ENCODE measurements at regions of chr4 and their contacts with region 1.

Region 1: GRCh38 chr4:56410235-56411062 is 23.2 kb upstream of the AASDH start:
- DNase-seq: peak; percentile 99
- H3K4me3 ChIP-seq: peak overlapping the region; percentile 20 to 76 (median 26)
- H3K27ac ChIP-seq: peak overlapping the region; percentile 97
- H3K4me1 ChIP-seq: peaks cover 29% of the 10 kb centered on the region
- H3K27me3 ChIP-seq: no peaks in the 10 kb centered on the region
- CTCF ChIP-seq: no peak
- POLR2A ChIP-seq: no peak

Region 2: GRCh38 chr4:56387023-56388001 is 23.1 kb before region 1 on chr4 and contains the start of gene AASDH:
- CTCF ChIA-PET with region 1: interaction called, 3 read pairs
- POLR2A ChIA-PET with region 1: interaction called, 13 read pairs
- dilution Hi-C with region 1: no loop called
- intact Hi-C with region 1: loop called (anchors 1 kb)
- DNase-seq: peak; percentile 98
- H3K4me3 ChIP-seq: peak within 1 kb of the TSS; percentile 67 to 92 (median 91)
- H3K27ac ChIP-seq: peak within 1 kb of the TSS; percentile 73
- H3K4me1 ChIP-seq: peaks cover 13% of the 10 kb centered on the region
- H3K27me3 ChIP-seq: no peaks in the 10 kb centered on the region
- CTCF ChIP-seq: no peak
- POLR2A ChIP-seq: peak; percentile 84
- total RNA-seq, gene AASDH: 6.9 and 9.5 TPM in 2 replicates

Region 3: DNA sequence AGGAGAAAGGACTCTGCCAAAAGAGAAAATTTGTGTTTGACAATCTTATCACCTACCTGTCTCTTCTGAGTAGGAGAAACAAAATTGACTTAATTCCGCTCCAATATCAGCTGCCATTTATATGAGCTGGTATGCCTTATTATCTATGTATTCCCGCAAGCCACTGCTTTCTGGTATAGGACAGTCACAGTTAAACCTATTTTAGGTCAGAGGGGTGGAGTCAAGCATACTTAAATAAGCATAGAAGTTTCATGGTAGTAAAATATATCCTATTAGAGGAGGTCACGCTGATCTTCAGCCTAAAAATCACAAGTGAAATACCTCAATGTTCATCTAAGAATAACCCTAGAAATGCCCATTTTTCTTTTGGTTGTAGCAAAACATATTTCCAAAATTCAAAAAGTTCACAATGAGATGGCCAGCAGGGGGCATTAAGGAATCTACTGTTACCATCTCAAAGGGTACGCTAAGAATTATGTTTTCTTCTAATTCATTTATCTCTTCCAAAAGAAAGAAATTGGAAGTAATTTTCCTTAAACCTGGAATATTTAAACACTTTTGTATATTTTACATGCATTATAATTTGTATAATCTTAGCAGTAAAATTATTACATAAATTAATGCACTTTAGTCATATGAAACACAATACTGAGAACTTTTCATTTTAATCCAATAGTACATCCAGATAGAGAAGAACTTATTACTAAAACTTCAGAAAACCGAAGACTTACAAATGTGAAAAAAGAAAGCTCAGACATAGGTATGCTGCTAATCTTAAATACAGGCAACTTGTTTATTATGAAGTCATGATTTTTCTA is 14.5 kb after region 1 on chr4:
- CTCF ChIA-PET with region 1: interaction called, 16 read pairs
- POLR2A ChIA-PET with region 1: interaction called, 3 read pairs
- dilution Hi-C with region 1: no loop called
- intact Hi-C with region 1: no loop called
- DNase-seq: peak; percentile 61
- H3K4me3 ChIP-seq: no peak overlapping the region
- H3K27ac ChIP-seq: no peak overlapping the region
- H3K4me1 ChIP-seq: peaks cover 6% of the 10 kb centered on the region
- H3K27me3 ChIP-seq: no peaks in the 10 kb centered on the region
- CTCF ChIP-seq: peak; percentile 40 to 45
- POLR2A ChIP-seq: no peak

Region 4: DNA sequence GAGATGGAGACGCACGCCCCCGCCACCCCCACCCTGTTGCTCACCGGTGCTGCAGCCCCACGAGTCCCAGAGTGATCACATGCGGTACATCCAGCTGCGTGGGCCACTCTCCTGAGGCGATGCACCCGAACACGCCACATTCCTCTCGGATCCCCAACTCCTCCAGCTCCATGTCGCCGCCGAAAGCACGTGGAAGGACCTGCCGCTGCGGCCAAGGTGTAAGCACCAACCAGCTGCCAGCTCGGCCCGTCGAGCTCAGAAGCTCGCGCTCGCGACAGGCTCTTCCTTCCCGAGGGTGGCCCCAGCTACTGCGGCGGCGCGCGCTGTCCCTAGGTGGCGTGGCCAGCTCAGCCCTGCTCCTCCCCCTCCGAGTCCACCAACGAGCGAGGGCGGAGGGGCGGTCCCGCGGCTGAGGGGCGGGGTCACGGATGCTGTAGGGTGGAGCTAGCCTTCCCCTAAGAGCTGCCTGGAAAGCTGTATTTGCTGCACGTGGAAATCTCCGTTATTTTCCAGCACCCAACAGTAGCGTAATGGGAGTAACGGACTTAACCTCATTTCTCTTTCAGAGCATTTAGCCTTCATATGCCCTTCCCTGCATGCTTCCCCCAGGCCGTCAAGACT is 25.0 kb after region 1 on chr4 and contains the start of gene PPAT:
- CTCF ChIA-PET with region 1: interaction called, 22 read pairs
- POLR2A ChIA-PET with region 1: interaction called, 4 read pairs
- dilution Hi-C with region 1: no loop called
- intact Hi-C with region 1: loop called (anchors 1 kb)
- DNase-seq: peak; percentile 100
- H3K4me3 ChIP-seq: peak within 1 kb of the TSS; percentile 77 to 86 (median 83)
- H3K27ac ChIP-seq: peak within 1 kb of the TSS; percentile 87
- H3K4me1 ChIP-seq: peaks cover 19% of the 10 kb centered on the region
- H3K27me3 ChIP-seq: no peaks in the 10 kb centered on the region
- CTCF ChIP-seq: peak in 1 of 2 donors; percentile 25
- POLR2A ChIP-seq: peak; percentile 83
- total RNA-seq, gene PPAT: 21.8 and 25.5 TPM in 2 replicates

Region 5: DNA sequence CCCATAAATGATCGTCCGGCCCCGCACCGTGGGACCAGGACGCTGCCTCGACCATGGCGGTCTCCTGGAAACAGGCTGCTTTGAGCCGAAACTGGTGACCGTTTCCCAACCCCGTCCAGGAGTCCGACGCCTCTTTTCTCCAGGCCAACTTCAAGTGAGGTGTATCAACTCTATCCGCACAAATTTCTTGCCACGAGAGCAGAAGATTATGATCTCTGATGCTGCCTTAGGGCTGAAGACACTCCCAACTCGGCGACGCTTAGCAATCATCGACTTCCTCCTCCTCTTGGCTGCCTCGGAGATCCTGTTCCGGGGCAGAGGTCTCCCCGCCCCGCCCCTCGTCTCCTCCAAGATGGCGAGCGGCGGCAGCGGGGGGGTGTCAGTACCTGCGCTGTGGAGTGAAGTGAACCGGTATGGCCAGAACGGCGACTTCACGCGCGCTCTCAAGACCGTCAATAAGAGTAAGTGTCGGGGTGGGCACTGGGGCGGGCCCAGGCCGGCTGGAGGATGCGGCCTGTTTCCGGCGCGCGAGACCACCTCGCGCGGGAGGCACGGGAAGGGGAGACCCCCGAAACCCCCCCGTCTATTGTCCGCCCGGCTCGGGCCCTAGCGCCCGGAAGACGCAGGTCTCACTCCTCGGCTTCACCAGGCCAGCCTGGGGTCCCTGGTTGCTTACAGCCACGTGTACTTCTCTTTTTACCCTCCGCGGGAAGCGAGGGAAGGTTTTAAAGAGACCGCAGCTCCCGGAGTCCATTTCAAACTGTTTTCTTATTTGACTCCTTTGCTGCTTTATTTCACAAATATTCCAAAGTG is 57.0 kb after region 1 on chr4 and contains the start of gene SRP72:
- CTCF ChIA-PET with region 1: no interaction called
- POLR2A ChIA-PET with region 1: no interaction called
- dilution Hi-C with region 1: no loop called
- intact Hi-C with region 1: loop called (anchors 1 kb)
- DNase-seq: peak; percentile 91
- H3K4me3 ChIP-seq: peak within 1 kb of the TSS; percentile 67 to 99 (median 98)
- H3K27ac ChIP-seq: peak within 1 kb of the TSS; percentile 94
- H3K4me1 ChIP-seq: peaks cover 27% of the 10 kb centered on the region
- H3K27me3 ChIP-seq: no peaks in the 10 kb centered on the region
- CTCF ChIP-seq: no peak
- POLR2A ChIP-seq: peak; percentile 90
- total RNA-seq, gene SRP72: 132 and 145 TPM in 2 replicates

Region 6: DNA sequence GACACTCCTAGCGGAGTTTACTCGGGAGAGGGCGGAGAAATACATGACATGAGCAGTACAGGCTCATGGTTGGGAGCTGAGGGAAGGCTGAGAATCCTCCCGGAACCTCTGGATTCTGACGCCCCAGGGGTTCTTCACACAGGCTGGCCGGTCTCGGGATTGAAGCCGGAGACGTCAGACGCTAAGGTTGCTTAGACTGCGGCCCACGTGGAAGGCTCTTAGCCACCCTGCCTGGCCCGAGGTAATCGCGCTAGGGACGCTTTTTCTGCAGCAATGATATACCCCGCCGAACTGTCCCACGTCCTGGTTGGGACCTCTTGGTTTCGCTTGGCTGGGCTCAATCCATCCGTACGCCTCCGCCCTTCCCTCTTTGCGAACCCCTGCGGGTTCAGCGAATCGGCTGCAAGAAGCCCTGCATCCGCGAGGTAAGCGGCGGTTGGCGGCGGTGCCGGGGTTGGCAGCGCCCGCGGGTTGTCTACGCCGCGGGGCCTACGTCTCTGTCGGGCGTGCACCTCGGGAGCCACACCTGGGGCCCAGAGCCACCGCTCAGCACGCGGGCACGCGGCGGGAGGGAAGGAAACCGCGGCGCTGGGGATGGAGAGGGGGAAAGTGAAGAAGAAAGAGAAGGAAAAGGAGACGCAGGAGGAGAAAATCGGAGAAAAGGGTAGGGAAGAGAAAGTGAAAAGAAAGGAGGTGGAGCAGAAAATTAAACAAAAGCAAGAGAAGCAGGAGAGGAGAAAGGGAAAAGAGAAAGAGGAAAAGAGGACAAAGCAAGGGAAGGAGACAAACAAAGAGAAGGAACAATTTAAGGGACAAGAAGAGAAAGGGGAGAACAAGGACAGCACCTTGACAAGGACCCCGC is 95.1 kb after region 1 on chr4 and contains the start of gene ARL9:
- CTCF ChIA-PET with region 1: no interaction called
- POLR2A ChIA-PET with region 1: no interaction called
- dilution Hi-C with region 1: no loop called
- intact Hi-C with region 1: loop called (anchors 1 kb)
- DNase-seq: peak; percentile 61
- H3K4me3 ChIP-seq: peak within 1 kb of the TSS; percentile 48 to 69 (median 67)
- H3K27ac ChIP-seq: no peak within 1 kb of the TSS
- H3K4me1 ChIP-seq: peaks cover 13% of the 10 kb centered on the region
- H3K27me3 ChIP-seq: no peaks in the 10 kb centered on the region
- CTCF ChIP-seq: no peak
- POLR2A ChIP-seq: no peak
- total RNA-seq, gene ARL9: 0.51 and 1.1 TPM in 2 replicates

Measured in endothelial cell of umbilical vein (primary cell).